Caki2 (cell line): ENCODE measurements at regions of chr3 and their contacts with region 1.

Region 1: GRCh38 chr3:189961525-189962161 is 159.1 kb downstream of the P3H2 start:
- DNase-seq: peak; percentile 81

Region 2: GRCh38 chr3:189786479-189787064 is 175.1 kb before region 1 on chr3:
- in situ Hi-C with region 1: no loop called
- DNase-seq: no peak

Region 3: DNA sequence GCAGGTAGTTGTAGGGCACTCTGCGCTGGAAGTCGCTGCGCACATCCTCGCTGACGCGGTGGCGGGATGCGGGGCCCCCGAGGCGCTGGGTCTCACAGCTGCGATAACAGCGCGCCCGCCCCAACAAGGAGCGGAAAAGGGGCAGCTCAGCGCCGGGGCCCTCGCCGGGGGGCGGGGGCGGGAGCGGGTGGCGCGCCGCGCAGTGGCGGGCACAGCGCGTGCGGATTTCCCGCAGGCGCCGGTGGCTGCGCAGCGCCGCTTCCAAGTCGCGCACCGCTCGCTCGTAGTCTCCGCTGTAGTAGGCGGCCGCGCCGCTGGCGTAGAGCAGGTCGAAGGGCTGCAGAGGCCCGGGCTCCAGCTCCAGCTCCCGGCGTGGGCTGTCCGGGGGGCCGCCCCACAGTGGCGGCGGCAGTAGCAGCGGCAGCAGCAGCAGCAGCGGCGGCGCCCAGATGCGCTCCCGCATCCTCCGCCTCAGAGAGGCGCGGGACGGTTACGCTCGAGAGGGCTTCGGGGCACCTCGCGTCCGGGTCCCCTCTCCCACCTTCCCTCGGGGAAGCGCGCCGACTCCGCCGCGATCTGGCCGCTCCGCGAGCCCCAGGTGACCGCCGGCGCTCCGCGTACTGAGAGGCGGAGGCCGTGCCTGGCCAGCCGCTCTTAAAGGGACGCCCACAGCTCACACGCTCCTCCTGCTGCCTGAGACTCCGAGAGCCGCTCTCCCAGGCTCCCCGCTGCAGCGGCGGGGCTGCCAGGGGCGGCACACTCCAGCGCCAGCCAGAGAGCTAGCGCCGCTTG is 158.8 kb after region 1 on chr3 and contains the start of gene P3H2:
- in situ Hi-C with region 1: loop called (anchors 10 kb)
- DNase-seq: peak; percentile 90
- total RNA-seq, gene P3H2: 152 and 185 TPM in 2 replicates

Region 4: DNA sequence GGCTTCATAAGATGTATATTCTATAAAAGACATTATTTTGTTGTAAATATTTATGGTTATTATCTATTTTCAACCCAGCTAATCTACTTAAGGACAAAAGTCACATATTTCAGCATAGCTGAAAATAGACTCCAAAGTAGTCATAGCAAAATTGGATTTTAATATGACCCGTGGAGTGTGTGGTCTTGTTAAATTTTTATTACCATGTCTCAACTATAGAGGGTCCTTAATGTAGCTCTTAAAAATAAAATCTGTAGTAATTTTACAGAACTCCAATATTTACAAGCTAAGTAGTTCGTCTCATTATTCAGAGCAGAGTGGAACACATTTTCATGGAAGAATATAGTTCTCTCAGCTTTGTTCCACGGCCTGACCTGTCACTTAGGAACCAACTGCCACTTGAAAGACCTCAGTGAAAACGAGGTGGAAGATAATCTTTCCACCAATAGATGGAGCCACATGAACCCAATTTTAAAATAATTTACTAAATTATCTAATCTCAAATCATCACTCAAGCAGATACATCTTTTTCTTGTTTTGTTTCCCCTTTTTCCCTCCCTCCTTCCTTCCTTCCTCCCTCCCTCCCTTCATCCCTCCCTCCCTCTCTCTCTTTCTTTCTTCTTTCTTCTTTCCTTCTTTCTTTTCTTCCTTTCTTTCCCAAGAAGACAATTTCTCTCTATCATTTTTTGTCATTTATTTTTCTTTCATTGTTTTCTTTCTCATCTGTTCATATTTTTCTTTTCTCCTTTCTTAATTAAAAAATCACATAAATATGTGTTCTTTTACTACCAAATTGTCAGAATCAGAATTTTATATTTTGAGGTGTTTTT is 263.4 kb after region 1 on chr3:
- in situ Hi-C with region 1: loop called (anchors 25 kb)
- DNase-seq: peak; percentile 46

Region 5: DNA sequence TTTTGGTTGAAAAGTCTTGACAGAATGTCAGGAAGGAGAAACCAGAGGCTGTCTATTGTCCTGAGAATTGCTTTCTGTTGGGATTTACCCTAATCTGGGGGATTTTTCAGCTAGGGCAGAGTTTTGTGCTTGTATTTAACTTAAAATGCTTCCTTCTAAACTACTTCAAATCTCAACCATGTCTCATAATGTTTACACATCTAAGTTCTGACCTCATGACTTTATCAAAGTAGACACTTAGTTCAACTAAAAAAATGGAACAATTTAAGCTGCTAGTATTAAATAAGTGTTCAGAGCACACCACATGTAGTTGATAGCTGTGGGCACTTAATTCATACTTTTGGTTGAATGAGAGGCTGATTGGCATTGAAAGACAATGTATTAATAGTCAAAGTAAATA is 332.4 kb after region 1 on chr3:
- in situ Hi-C with region 1: no loop called
- DNase-seq: no peak

Region 6: GRCh38 chr3:190321789-190322603 is 360.4 kb after region 1 on chr3 and contains the start of gene CLDN1:
- in situ Hi-C with region 1: loop called (anchors 25 kb)
- DNase-seq: peak; percentile 78
- total RNA-seq, gene CLDN1: 129 and 151 TPM in 2 replicates